PC-9 (cell line): ENCODE measurements at regions of chr18 and their contacts with region 1.

Region 1: DNA sequence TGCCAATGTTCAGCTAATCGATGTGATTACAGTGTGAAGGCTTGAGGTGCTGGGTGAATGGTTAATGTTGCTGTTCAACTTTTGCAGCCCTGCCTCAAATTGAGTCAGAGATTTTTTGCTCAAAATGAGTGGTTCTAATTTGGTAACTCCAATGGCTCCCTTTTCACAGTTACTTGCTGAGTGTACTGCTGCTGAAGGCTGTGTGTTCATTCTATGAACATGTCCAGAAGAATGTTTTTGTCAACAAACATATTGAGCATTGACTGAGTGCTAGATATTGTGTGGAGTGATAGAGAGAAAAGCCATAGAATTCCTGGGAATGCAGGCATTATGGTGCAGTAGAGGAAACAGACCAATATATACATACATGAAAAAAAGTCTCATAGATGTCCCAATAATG is 39.0 kb upstream of the TCF4 start:
- DNase-seq: no peak
- H3K4me3 ChIP-seq: no peak overlapping the region
- H3K27ac ChIP-seq: no peak overlapping the region
- H3K4me1 ChIP-seq: no peaks in the 10 kb centered on the region
- H3K27me3 ChIP-seq: no peaks in the 10 kb centered on the region
- CTCF ChIP-seq: no peak

Region 2: DNA sequence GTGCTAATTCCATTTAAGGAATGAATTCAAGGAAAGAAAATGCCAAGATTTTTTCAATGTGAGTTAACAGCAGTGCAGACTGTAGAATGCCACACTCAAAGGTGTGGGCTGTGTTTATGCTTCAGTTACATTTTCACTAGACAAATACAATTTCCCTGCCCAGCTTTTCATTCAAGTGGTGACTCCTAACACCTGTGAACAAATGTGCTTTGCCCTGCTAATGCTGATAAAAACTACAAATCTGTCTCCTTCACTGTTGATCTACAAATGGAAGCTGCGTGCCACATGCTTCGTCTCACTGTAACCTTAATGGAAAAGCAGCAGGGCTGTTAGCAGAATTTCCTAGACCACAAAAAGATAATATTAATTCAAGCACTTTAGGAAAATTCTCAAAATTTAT is 19.2 kb before region 1 on chr18:
- CTCF ChIA-PET with region 1: no interaction called
- POLR2A ChIA-PET with region 1: interaction called, 28 read pairs
- intact Hi-C with region 1: no loop called
- DNase-seq: no peak
- H3K4me3 ChIP-seq: no peak overlapping the region
- H3K27ac ChIP-seq: no peak overlapping the region
- H3K4me1 ChIP-seq: no peaks in the 10 kb centered on the region
- H3K27me3 ChIP-seq: no peaks in the 10 kb centered on the region
- CTCF ChIP-seq: no peak